GM13976 (cell line): ENCODE measurements at regions of chr9 and their contacts with region 1.

Region 1: DNA sequence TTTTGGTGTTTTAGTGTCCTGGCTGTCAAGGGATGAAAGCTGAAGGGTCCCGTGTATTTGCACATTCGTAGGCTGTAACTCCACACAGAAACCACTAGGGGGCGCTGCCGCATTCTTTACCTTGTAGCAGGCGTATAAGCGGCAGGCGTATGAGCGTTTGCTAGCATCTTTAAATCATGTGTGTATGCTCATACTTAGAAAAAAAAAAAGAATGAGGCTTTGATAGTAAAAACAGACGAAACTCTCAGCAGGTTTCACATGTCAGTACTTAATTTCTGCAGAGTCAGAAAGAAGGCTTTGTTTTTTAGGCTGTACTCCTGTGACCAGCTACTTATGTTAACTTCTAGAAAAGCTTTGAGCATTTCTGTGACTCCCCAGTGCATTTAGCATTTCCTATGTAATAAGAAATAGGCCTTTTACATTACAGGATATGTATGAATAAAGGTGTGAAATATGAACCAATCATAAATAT is 218.8 kb upstream of the ADAMTSL1 start:
- DNase-seq: peak; percentile 67
- CTCF ChIP-seq: peak; percentile 84

Region 2: GRCh38 chr9:18405240-18405639 is 150.0 kb after region 1 on chr9:
- in situ Hi-C with region 1: loop called (anchors 25 kb)
- DNase-seq: no peak
- CTCF ChIP-seq: no peak

Region 3: DNA sequence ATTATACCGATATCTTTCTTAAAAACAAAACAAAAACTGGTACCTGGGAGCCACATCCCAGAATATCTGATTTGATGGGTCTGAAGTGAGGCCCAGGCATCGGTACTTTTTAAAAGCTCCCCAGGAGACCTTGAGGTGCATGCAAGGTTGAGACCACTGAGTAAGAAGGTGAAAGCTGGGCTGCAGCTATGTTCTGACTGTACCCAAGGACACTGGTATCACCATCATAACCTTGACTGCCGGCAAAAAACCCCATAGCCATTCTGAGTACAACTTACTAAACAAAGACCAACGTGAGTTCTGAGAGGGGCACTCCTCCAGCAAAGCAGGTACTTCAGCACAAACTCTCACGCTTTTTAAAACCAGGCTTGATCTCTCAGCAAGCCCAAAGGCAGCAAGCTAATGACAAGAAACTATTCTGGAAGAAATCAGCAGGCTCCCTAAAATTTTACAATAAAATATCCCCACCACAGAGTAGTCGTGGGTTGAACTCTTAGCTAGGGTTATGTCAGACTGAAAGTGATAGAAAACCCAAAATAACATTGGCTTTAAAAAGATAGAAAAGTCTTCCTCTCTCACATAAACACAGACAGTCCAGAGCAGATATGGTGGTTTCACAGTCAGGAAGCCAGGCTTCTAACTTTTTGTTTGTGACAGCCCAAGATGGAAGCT is 513.9 kb after region 1 on chr9:
- in situ Hi-C with region 1: no loop called
- DNase-seq: no peak
- CTCF ChIP-seq: no peak

Region 4: GRCh38 chr9:19174127-19174912 is 919.1 kb after region 1 on chr9:
- in situ Hi-C with region 1: loop called (anchors 25 kb)
- DNase-seq: peak; percentile 77
- CTCF ChIP-seq: peak; percentile 11